ENCODE measurements at regions of chr2 and their contacts with region 1.

Region 1: DNA sequence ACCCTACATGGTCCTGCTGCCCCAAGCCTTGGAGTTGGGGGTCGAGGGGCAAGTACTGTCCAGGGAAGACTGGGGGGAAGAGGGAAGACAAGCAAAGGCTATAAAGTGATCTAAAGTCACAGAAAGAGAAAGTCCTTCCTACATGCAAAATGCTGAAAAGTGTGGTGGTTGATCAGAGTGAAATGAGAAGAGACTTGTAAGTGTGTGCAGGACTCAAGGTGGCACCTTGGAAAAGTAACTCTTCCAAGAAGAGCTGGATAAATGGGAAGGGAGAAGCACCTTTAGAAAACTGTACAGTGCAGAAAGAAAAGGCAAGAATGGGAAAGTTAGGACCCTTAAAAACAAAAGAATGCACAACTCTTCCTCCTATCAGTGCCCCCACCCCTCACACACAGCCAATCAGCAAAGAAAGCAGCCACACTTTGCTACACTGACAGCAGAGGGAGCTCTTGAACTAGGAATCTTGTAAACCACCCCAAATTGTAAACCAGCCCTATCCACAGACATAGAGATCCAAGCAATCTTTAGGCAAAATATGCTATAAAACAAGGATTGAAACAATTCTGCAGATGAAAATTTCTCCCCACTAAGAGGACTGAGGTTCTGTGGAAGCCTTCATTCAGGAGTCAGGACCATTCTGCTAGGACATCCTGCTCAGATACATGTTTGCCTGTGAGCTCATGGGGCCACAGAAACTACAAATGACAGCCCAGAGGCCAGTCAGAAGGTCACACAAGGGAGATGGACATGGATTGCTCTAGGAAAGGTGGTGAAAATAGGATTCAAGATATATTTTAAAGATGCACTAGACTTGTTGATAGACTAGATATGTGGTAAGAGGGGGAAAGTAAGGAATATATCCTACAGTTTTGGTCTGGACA is 146.4 kb downstream of the FTCDNL1 start:
- DNase-seq: peak; percentile 53
- ATAC-seq: peak; percentile 99
- H3K4me3 ChIP-seq: no peak overlapping the region
- H3K27ac ChIP-seq: no peak overlapping the region
- H3K4me1 ChIP-seq: no peaks in the 10 kb centered on the region
- H3K27me3 ChIP-seq: no peaks in the 10 kb centered on the region
- CTCF ChIP-seq: peak; percentile 90
- EP300 ChIP-seq: no peak
- POLR2A ChIP-seq: no peak
- RAD21 ChIP-seq: peak; percentile 91

Region 2: DNA sequence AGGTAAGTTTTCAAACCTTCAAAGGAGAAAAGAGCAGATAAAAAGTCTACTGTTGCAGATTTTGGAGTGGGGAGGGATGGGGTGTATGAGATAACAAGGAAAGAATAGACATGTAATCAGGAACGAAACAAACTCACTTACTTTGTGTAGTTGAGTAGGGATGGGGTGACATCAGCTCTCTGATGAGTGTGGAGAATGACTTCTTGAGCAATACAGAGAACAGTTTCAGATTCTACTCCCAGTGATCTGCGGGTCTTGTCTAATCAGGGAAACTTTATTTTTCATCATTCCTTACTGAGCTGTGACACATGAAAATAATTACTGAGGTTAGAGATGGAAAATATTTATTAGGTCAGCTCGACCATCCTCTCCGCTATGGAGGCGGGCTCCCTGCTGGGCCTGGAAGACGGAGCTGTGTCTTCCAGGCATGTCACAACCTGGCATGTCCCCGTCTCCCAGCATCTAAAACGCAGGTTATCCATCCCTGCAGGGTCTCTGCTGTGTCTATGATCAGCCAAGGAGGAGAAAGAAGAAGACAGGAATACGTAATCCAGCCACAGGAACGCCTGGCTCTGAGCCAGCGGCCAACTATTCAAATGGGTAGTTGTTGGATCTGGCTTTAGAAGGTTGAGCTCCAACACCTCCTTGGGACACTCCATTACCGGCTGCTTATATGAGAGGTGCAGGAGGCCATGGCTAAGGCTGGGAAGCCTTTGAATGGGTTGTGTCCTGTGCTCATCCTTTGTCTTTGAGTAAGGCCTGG is 147.9 kb before region 1 on chr2:
- CTCF ChIA-PET with region 1: no interaction called
- POLR2A ChIA-PET with region 1: no interaction called
- in situ Hi-C with region 1: no loop called
- intact Hi-C with region 1: no loop called
- DNase-seq: no peak
- ATAC-seq: no peak; the same call in 1 of the 3 replicates
- H3K4me3 ChIP-seq: no peak overlapping the region
- H3K27ac ChIP-seq: no peak overlapping the region
- H3K4me1 ChIP-seq: no peaks in the 10 kb centered on the region
- H3K27me3 ChIP-seq: peaks cover 4 to 6% of the 10 kb centered on the region in 2 experiments; a peak in 3 of 5 replicates
- CTCF ChIP-seq: no peak
- EP300 ChIP-seq: no peak
- POLR2A ChIP-seq: no peak
- RAD21 ChIP-seq: no peak

Region 3: GRCh38 chr2:199757233-199757870 is 52.8 kb after region 1 on chr2:
- CTCF ChIA-PET with region 1: no interaction called
- POLR2A ChIA-PET with region 1: no interaction called
- in situ Hi-C with region 1: no loop called
- intact Hi-C with region 1: no loop called
- DNase-seq: no peak
- ATAC-seq: no peak
- H3K4me3 ChIP-seq: no peak overlapping the region
- H3K27ac ChIP-seq: no peak overlapping the region
- H3K4me1 ChIP-seq: no peaks in the 10 kb centered on the region
- H3K27me3 ChIP-seq: 0 out of 5 replicates have a peak, but pooled peaks cover 0 to 6% of the 10 kb centered on the region in 2 experiments
- CTCF ChIP-seq: no peak
- EP300 ChIP-seq: no peak
- POLR2A ChIP-seq: no peak
- RAD21 ChIP-seq: no peak

Region 4: DNA sequence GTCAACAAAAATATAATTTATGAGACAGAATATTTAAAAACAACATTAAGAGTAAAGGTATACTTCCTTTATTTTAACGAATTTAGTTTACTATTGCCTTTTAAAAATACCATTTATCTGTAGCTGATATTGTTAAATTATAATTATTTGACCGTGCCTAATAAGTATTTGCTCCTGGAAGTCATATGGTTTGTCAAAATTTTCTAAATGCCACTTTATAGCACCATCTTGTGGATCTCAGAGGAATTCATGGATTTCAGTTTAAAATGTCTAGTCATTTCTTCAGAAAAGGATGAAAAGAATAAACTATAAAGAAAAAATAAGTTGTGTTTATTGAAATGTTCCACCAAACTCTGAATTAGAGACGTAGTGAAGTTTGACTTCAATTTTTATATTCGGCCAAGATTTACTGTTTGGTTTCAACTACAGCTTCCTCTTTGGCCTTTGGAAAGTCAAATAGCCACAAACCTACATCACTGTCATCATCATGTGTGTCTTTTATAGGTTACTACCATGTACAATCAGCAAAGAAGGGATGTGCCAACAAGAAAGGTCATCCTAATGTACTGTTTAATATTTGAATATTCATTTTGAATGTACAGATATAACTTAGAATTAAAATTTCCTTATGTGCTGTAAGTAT is 156.7 kb after region 1 on chr2:
- CTCF ChIA-PET with region 1: interaction called, 28 read pairs
- POLR2A ChIA-PET with region 1: no interaction called
- in situ Hi-C with region 1: loop called (anchors 5 kb)
- intact Hi-C with region 1: loop called (anchors 1 kb)
- DNase-seq: peak; percentile 24
- ATAC-seq: no peak
- H3K4me3 ChIP-seq: no peak overlapping the region
- H3K27ac ChIP-seq: no peak overlapping the region
- H3K4me1 ChIP-seq: no peaks in the 10 kb centered on the region
- H3K27me3 ChIP-seq: peaks cover 0 to 10% of the 10 kb centered on the region in 2 experiments; a peak in 1 of 5 replicates
- CTCF ChIP-seq: peak; percentile 60
- EP300 ChIP-seq: no peak
- POLR2A ChIP-seq: no peak
- RAD21 ChIP-seq: peak; percentile 32; the same call in 1 of the 2 replicates

Region 5: DNA sequence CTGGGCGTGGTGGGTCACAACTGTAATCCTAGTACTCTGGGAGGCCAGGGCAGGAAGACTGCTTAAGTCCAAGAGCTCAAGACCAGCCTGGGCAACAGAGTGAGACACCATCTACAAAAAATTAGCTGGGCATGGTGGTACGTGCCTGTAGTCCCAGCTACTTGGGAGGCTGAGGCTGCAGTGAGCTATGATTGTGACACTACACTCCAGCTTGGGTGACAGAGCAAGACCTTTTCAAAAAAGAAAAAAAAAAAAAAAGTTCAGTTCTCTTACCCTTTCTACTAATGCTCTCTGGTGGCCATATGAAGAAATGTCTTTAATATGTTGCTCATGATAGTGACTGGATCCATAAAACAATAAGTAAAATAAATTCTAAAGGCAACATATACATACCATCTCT is 235.8 kb after region 1 on chr2:
- CTCF ChIA-PET with region 1: no interaction called
- POLR2A ChIA-PET with region 1: no interaction called
- in situ Hi-C with region 1: no loop called
- intact Hi-C with region 1: loop called (anchors 1 kb)
- DNase-seq: peak; percentile 40
- ATAC-seq: peak; percentile 83
- H3K4me3 ChIP-seq: no peak overlapping the region
- H3K27ac ChIP-seq: no peak overlapping the region
- H3K4me1 ChIP-seq: peaks cover 25% of the 10 kb centered on the region
- H3K27me3 ChIP-seq: no peaks in the 10 kb centered on the region
- CTCF ChIP-seq: peak; percentile 44
- EP300 ChIP-seq: no peak
- POLR2A ChIP-seq: no peak
- RAD21 ChIP-seq: no peak